CD8-positive, alpha-beta memory T cell (primary cell): ENCODE measurements at regions of chr12 and their contacts with region 1.

Region 1: GRCh38 chr12:54246011-54246641 is 33.8 kb downstream of the CBX5 start:
- DNase-seq: no peak
- H3K4me3 ChIP-seq: no peak overlapping the region
- H3K4me3 Mint-ChIP-seq: no peak overlapping the region
- H3K27ac ChIP-seq: no peak overlapping the region
- H3K27ac Mint-ChIP-seq: no peak overlapping the region
- H3K4me1 ChIP-seq: no peaks in the 10 kb centered on the region
- H3K4me1 Mint-ChIP-seq: peaks cover 0 to 5% (median 4%) of the 10 kb centered on the region in 3 donors
- H3K27me3 ChIP-seq: no peaks in the 10 kb centered on the region
- H3K27me3 Mint-ChIP-seq: no peaks in the 10 kb centered on the region

Region 2: DNA sequence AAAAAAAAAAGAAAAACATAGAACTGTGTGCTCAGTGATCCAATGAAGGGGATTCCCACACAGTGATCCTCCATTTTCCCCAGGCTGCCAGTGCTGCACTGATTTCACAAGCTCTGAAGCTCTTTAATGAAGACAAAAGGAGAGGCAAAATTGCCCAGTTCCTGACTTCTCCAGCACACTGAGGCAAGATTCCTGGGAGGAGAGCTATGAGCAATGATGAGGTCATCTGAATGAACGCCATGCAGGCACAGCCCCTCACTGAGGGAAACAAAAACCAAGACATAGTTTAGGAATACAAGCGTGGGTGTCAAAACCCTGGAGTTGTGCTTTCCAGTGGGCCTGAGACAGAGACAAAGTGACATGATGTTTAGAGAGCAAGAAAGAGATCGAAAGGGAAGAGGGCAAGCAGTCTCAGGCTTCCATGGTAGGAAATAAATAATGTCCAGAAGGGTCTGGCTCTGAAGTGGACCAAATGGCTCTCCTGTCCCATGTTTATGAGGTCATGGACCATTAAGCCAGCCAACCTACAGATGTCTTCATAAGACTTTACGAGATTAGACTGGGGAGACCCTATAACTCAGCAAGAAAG is 16.4 kb before region 1 on chr12:
- CTCF ChIA-PET with region 1: no interaction called
- POLR2A ChIA-PET with region 1: interaction called, 10 read pairs
- DNase-seq: no peak
- H3K4me3 ChIP-seq: no peak overlapping the region
- H3K4me3 Mint-ChIP-seq: no peak overlapping the region
- H3K27ac ChIP-seq: no peak overlapping the region
- H3K27ac Mint-ChIP-seq: no peak overlapping the region
- H3K4me1 ChIP-seq: no peaks in the 10 kb centered on the region
- H3K4me1 Mint-ChIP-seq: no peaks in the 10 kb centered on the region
- H3K27me3 ChIP-seq: no peaks in the 10 kb centered on the region
- H3K27me3 Mint-ChIP-seq: no peaks in the 10 kb centered on the region